ENCODE measurements at regions of chr1 and their contacts with region 1.

Region 1: GRCh38 chr1:67777440-67777839 is 55.8 kb downstream of the GNG12 start:
- DNase-seq: no peak
- ATAC-seq: no peak
- H3K4me3 ChIP-seq: no peak overlapping the region
- H3K27ac ChIP-seq: no peak overlapping the region
- H3K4me1 ChIP-seq: peaks cover 4% of the 10 kb centered on the region; the same call in 1 of the 2 replicates
- H3K27me3 ChIP-seq: no peaks in the 10 kb centered on the region
- CTCF ChIP-seq: no peak

Region 2: GRCh38 chr1:67713057-67713846 is 64.2 kb before region 1 on chr1:
- CTCF ChIA-PET with region 1: no interaction called
- POLR2A ChIA-PET with region 1: no interaction called
- intact Hi-C with region 1: no loop called
- DNase-seq: peak; percentile 96
- ATAC-seq: peak; percentile 58
- H3K4me3 ChIP-seq: peak overlapping the region; percentile 41
- H3K27ac ChIP-seq: peak overlapping the region; percentile 88
- H3K4me1 ChIP-seq: peaks cover 77% of the 10 kb centered on the region
- H3K27me3 ChIP-seq: no peaks in the 10 kb centered on the region
- CTCF ChIP-seq: no peak

Region 3: GRCh38 chr1:67814121-67814772 is 36.8 kb after region 1 on chr1:
- CTCF ChIA-PET with region 1: no interaction called
- POLR2A ChIA-PET with region 1: no interaction called
- intact Hi-C with region 1: loop called (anchors 5 kb)
- DNase-seq: no peak
- ATAC-seq: no peak
- H3K4me3 ChIP-seq: no peak overlapping the region
- H3K27ac ChIP-seq: no peak overlapping the region
- H3K4me1 ChIP-seq: 0 out of 2 replicates have a peak, but pooled peaks cover 4% of the 10 kb centered on the region
- H3K27me3 ChIP-seq: no peaks in the 10 kb centered on the region
- CTCF ChIP-seq: no peak

Region 4: GRCh38 chr1:67957066-67957465 is 179.6 kb after region 1 on chr1:
- CTCF ChIA-PET with region 1: no interaction called
- POLR2A ChIA-PET with region 1: no interaction called
- intact Hi-C with region 1: no loop called
- DNase-seq: no peak
- ATAC-seq: no peak
- H3K4me3 ChIP-seq: no peak overlapping the region
- H3K27ac ChIP-seq: no peak overlapping the region
- H3K4me1 ChIP-seq: no peaks in the 10 kb centered on the region
- H3K27me3 ChIP-seq: no peaks in the 10 kb centered on the region
- CTCF ChIP-seq: no peak